Psoas muscle (tissue), 8 donors: ENCODE measurements at regions of chr7 and their contacts with region 1.

Region 1: GRCh38 chr7:29105752-29106668 is 40.3 kb downstream of the CPVL start:
- DNase-seq: peak in 1 of 2 donors; percentile 21
- ATAC-seq: peak; percentile 80 to 88 (median 84)
- H3K4me3 ChIP-seq: no peak overlapping the region
- H3K27ac ChIP-seq: no peak overlapping the region
- H3K4me1 ChIP-seq: peaks cover 2% of the 10 kb centered on the region
- H3K27me3 ChIP-seq: no peaks in the 10 kb centered on the region
- CTCF ChIP-seq: peak; percentile 89

Region 2: GRCh38 chr7:28921822-28922221 is 184.2 kb before region 1 on chr7:
- intact Hi-C with region 1: loop called (anchors 2 kb)
- DNase-seq: no peak
- ATAC-seq: peak; percentile 93 to 98 (median 95)
- H3K4me3 ChIP-seq: no peak overlapping the region
- H3K27ac ChIP-seq: no peak overlapping the region
- H3K4me1 ChIP-seq: peaks cover 12% of the 10 kb centered on the region
- H3K27me3 ChIP-seq: no peaks in the 10 kb centered on the region
- CTCF ChIP-seq: peak; percentile 88

Region 3: GRCh38 chr7:28926871-28927597 is 179.0 kb before region 1 on chr7:
- intact Hi-C with region 1: loop called (anchors 2 kb)
- DNase-seq: peak; percentile 66 to 78
- ATAC-seq: peak; percentile 78 to 87 (median 84)
- H3K4me3 ChIP-seq: peak overlapping the region; percentile 61
- H3K27ac ChIP-seq: no peak overlapping the region
- H3K4me1 ChIP-seq: peaks cover 10% of the 10 kb centered on the region
- H3K27me3 ChIP-seq: no peaks in the 10 kb centered on the region
- CTCF ChIP-seq: peak; percentile 81

Region 4: DNA sequence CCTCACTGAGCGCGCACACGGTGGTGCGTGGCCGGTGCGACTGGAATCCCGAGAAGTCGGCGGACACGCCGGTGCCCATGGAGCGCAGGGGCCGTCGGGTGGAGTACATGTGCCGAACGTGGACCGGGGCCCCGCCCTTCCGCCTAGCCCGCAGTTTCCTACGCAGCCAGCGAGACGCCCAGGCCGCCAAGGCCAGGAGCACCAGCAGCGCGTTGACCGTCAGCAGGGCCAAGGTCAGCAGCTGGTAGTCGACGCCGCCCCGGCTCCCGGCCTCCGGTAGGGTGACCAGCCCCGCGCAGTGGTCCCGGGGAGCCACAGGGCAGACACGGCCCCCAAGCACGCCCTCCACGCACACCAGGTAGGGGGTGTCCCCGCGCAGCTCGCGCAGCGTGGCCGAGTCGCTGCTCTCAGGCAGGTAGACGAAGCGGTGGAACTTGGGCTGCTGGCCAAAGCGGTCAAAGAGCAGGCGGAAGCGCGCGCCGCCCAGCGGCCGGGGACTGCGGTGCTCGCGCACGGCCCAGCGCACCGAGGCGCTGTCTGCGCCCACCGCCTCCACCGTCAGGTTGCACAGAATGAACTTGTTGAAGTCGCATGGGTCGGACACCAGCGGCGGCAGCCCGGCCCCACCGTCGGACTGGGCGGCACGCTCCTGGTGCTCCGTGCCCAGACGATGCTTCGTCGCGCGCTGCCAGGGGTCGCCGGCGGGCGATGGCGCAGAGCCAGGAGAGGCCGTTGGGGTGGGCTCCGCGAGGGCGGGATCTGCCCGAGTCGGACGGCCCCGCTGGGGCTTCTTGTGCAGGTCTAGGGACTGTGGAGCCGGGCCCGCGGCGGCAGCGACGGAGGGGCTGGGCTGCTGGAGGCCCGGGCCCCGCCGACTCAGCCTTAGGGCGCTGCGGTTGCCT is 150.0 kb before region 1 on chr7:
- intact Hi-C with region 1: loop called (anchors 1 to 10 kb)
- DNase-seq: peak; percentile 82 to 90
- ATAC-seq: peak; percentile 79 to 85 (median 82)
- H3K4me3 ChIP-seq: peak overlapping the region; percentile 78
- H3K27ac ChIP-seq: no peak overlapping the region
- H3K4me1 ChIP-seq: peaks cover 16% of the 10 kb centered on the region
- H3K27me3 ChIP-seq: peaks cover 0 to 21% (median 5%) of the 10 kb centered on the region in 3 donors
- CTCF ChIP-seq: peak; percentile 75

Region 5: DNA sequence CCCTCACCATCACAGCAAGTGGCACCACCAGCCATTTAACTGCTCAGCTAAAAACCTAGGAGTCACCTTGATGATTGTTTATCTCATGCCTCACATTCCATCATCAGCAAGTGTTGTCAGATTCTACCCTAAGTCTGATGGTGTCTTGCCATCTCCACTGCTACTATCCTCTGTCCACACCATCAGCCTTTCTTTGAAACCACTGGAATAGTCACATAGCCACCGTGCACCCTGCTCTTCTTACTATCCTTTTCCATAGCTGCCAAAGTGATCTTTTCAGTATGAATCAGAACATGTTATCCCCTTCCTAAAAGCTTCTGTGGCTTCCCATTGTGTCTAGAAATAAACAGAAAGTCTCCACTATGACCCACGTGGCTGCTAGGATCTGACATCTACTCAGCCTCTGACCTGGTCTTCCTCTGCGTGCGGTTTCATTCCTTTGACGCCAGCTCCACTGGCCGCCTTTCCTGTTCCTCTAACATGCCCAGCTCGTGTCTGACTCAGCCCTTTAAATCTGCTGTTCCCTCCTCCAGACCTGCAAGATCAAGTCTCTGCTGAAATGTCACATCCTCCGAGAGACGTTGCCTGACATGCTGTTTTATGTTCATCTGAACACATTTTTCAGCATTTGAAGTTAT is 72.1 kb after region 1 on chr7:
- intact Hi-C with region 1: no loop called
- DNase-seq: peak in 1 of 2 donors; percentile 18
- ATAC-seq: peak in 1 of 4 donors; percentile 50
- H3K4me3 ChIP-seq: no peak overlapping the region
- H3K27ac ChIP-seq: no peak overlapping the region
- H3K4me1 ChIP-seq: no peaks in the 10 kb centered on the region
- H3K27me3 ChIP-seq: no peaks in the 10 kb centered on the region
- CTCF ChIP-seq: no peak